PC-3 (cell line): ENCODE measurements at regions of chr9 and their contacts with region 1.

Region 1: DNA sequence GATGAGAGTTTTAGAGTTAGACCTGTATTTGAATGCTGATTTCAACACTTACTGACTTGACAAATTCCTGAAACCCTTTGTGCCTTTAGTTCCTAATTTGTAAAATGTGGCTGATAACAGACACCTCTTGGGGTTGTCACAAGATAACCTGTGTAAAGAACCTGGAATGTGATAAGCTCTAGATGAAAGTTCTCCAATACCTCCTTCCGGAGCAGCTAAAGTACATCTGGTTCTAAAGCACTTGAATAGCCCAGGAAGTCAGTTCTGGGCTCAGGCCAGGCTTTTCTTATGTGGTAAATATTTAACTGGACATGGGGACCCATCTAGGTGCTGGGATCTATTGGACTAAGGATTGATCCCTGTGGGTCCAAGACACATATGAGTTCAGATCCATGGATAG is 310.8 kb upstream of the ADAMTSL1 start:
- DNase-seq: no peak
- ATAC-seq: no peak
- H3K4me3 ChIP-seq: no peak overlapping the region
- H3K27ac ChIP-seq: no peak overlapping the region
- H3K4me1 ChIP-seq: no peaks in the 10 kb centered on the region
- H3K27me3 ChIP-seq: no peaks in the 10 kb centered on the region
- CTCF ChIP-seq: no peak

Region 2: GRCh38 chr9:18056993-18057369 is 106.2 kb before region 1 on chr9:
- CTCF ChIA-PET with region 1: no interaction called
- POLR2A ChIA-PET with region 1: no interaction called
- intact Hi-C with region 1: no loop called
- DNase-seq: no peak
- ATAC-seq: no peak
- H3K4me3 ChIP-seq: no peak overlapping the region
- H3K27ac ChIP-seq: no peak overlapping the region
- H3K4me1 ChIP-seq: 0 out of 2 replicates have a peak, but pooled peaks cover 4% of the 10 kb centered on the region
- H3K27me3 ChIP-seq: no peaks in the 10 kb centered on the region
- CTCF ChIP-seq: no peak

Region 3: GRCh38 chr9:19102631-19103345 is 939.6 kb after region 1 on chr9 and contains the start of gene HAUS6:
- CTCF ChIA-PET with region 1: no interaction called
- POLR2A ChIA-PET with region 1: interaction called, 19 read pairs
- intact Hi-C with region 1: no loop called
- DNase-seq: peak; percentile 91
- ATAC-seq: peak; percentile 94
- H3K4me3 ChIP-seq: peak within 1 kb of the TSS; percentile 83
- H3K27ac ChIP-seq: peak within 1 kb of the TSS; percentile 31
- H3K4me1 ChIP-seq: peaks cover 7% of the 10 kb centered on the region; the same call in 1 of the 2 replicates
- H3K27me3 ChIP-seq: no peaks in the 10 kb centered on the region
- CTCF ChIP-seq: no peak
- total RNA-seq, gene HAUS6: 12.3 and 14.4 TPM in 2 replicates